ENCODE measurements at regions of chr13 and their contacts with region 1.

Region 1: GRCh38 chr13:36282818-36283445 is 14.7 kb downstream of the CCDC169 start:
- DNase-seq: peak; percentile 60
- ATAC-seq: peak; percentile 59
- H3K4me3 ChIP-seq: no peak overlapping the region
- H3K27ac ChIP-seq: no peak overlapping the region
- H3K4me1 ChIP-seq: no peaks in the 10 kb centered on the region
- H3K27me3 ChIP-seq: no peaks in the 10 kb centered on the region
- CTCF ChIP-seq: peak; percentile 84

Region 2: GRCh38 chr13:36207672-36208071 is 75.3 kb before region 1 on chr13:
- CTCF ChIA-PET with region 1: no interaction called
- POLR2A ChIA-PET with region 1: no interaction called
- intact Hi-C with region 1: no loop called
- DNase-seq: no peak
- ATAC-seq: no peak
- H3K4me3 ChIP-seq: no peak overlapping the region
- H3K27ac ChIP-seq: no peak overlapping the region
- H3K4me1 ChIP-seq: no peaks in the 10 kb centered on the region
- H3K27me3 ChIP-seq: peaks cover 23% of the 10 kb centered on the region
- CTCF ChIP-seq: peak; percentile 30; the same call in 1 of the 2 replicates

Region 3: DNA sequence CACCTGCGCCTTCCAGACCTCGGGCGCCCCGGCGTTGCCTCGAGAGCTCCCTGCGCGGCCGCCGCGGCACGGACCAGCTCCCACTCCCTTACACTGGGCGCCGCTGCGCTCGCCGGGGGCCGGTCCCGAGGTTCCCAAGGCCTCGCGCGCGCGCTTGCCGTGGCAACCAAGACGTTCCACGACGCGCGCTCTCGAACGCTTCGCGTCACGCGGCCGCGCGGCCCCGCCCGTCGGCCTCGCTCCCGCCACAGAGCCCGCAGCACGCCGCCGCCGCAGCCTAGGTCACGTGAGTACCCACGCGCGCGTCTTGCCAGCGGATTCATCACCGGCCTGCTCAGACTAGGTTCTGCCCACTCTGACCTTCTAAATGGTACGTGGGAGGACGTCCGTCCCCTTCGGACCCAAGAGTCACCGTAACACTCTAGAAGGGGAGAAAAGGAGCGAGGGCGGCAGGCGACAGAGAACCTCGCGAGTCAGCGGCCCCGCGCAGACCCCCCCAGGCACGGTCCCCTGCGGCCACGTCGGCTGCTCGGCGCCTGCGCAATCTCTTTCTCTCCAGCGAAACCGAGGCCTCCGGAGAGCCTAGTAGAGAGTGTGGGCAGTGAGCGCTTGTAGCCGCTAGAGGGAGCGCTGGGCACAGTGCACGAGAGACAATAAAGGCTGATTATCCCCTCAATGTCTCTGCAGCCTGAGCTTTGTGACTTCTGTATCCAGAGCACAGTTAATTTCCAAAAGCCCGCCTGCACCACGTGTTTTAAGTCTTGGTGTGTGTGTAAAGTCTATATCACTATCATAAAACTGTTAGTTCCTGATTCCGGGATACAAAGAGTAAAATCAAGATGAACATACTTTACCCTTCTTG is 63.5 kb after region 1 on chr13 and contains the start of gene SPART:
- CTCF ChIA-PET with region 1: interaction called, 3 read pairs
- POLR2A ChIA-PET with region 1: no interaction called
- intact Hi-C with region 1: loop called (anchors 1 kb)
- DNase-seq: peak; percentile 83
- ATAC-seq: peak; percentile 95
- H3K4me3 ChIP-seq: peak within 1 kb of the TSS; percentile 92
- H3K27ac ChIP-seq: peak within 1 kb of the TSS; percentile 40
- H3K4me1 ChIP-seq: no peaks in the 10 kb centered on the region
- H3K27me3 ChIP-seq: no peaks in the 10 kb centered on the region
- CTCF ChIP-seq: peak; percentile 84
- total RNA-seq, gene SPART: 15.0 and 23.3 TPM in 2 replicates

Region 4: DNA sequence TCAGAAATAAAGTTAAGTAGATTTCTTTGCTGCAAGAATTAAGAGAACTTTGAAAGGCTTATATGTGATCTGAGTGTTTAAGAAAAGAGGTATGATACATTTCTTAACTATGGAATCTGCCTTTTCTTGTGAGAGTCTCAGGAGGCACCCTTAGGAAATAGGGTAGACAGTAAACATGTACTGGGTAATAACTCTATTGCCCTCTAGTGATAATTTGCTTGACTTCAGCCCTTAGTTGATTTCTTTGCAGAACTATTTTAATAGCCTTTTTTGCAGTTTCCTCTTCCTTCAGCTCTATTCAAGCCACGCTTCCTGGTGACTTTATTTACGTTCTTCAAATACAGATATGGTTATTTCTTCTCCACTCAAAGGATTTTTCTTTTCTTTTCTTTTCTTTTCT is 112.3 kb after region 1 on chr13:
- CTCF ChIA-PET with region 1: interaction called, 6 read pairs
- POLR2A ChIA-PET with region 1: no interaction called
- intact Hi-C with region 1: loop called (anchors 1 kb)
- DNase-seq: peak; percentile 44
- ATAC-seq: peak; percentile 78
- H3K4me3 ChIP-seq: no peak overlapping the region
- H3K27ac ChIP-seq: no peak overlapping the region
- H3K4me1 ChIP-seq: no peaks in the 10 kb centered on the region
- H3K27me3 ChIP-seq: no peaks in the 10 kb centered on the region
- CTCF ChIP-seq: peak; percentile 51

Region 5: GRCh38 chr13:36841391-36841790 is 558.5 kb after region 1 on chr13:
- CTCF ChIA-PET with region 1: no interaction called
- POLR2A ChIA-PET with region 1: no interaction called
- intact Hi-C with region 1: loop called (anchors 2 kb)
- DNase-seq: peak; percentile 36
- ATAC-seq: peak; percentile 29; the same call in 1 of the 2 replicates
- H3K4me3 ChIP-seq: no peak overlapping the region
- H3K27ac ChIP-seq: no peak overlapping the region
- H3K4me1 ChIP-seq: no peaks in the 10 kb centered on the region
- H3K27me3 ChIP-seq: no peaks in the 10 kb centered on the region
- CTCF ChIP-seq: peak; percentile 29; the same call in 1 of the 2 replicates

Region 6: GRCh38 chr13:37412241-37412921 is 1129.4 kb after region 1 on chr13:
- CTCF ChIA-PET with region 1: no interaction called
- POLR2A ChIA-PET with region 1: no interaction called
- intact Hi-C with region 1: no loop called
- DNase-seq: no peak
- ATAC-seq: no peak
- H3K4me3 ChIP-seq: no peak overlapping the region
- H3K27ac ChIP-seq: no peak overlapping the region
- H3K4me1 ChIP-seq: no peaks in the 10 kb centered on the region
- H3K27me3 ChIP-seq: no peaks in the 10 kb centered on the region
- CTCF ChIP-seq: no peak

Measured in PC-3 (cell line).